Posterior cingulate gyrus (tissue), 11 donors: ENCODE measurements at regions of chr19 and their contacts with region 1.

Region 1: GRCh38 chr19:5031231-5032100 is 62.6 kb downstream of the KDM4B start:
- DNase-seq: peak; percentile 78 to 98 (median 92)

Region 2: GRCh38 chr19:4815426-4816201 is 215.9 kb before region 1 on chr19:
- intact Hi-C with region 1: loop called (anchors 2 kb)
- DNase-seq: peak; percentile 84 to 98 (median 92)

Region 3: GRCh38 chr19:4873930-4874329 is 157.5 kb before region 1 on chr19:
- intact Hi-C with region 1: loop called (anchors 1 kb)
- DNase-seq: no peak

Region 4: DNA sequence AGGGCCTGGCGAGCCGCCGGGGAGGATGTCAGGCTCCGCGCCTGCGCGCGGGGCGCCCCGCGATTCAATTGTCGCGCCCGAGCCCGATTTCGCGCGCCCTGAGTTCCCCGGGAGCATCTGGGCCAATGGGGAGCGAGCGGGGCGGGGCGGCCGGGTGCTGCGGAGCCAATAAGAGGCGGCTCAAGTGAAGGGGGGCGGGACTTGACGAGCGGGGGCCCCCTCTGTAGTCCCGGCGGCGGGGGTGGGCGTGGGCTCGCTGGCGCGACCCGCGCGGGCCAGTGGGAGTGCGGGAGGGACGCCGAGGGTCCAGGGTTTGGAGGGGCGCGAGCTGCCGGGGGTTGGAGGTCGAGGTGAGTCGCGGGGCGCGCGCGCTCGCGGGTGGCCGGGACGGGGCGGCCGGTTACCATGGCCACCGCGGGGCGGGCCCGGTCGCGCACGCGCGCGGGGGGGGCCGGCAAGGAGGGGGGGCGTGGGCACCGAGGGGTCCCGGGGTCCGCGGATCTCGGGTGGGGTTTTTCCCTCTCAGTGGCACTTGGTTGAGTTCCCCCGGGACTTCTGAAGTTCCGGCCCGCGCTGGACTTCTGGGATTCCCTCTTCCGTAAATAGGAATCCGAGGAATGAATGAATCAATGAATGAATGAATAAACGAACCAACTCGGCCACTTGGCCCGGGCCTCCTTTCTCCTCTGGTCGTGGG is 121.4 kb before region 1 on chr19:
- intact Hi-C with region 1: loop called (anchors 5 kb)
- DNase-seq: peak; percentile 78 to 99 (median 93)

Region 5: DNA sequence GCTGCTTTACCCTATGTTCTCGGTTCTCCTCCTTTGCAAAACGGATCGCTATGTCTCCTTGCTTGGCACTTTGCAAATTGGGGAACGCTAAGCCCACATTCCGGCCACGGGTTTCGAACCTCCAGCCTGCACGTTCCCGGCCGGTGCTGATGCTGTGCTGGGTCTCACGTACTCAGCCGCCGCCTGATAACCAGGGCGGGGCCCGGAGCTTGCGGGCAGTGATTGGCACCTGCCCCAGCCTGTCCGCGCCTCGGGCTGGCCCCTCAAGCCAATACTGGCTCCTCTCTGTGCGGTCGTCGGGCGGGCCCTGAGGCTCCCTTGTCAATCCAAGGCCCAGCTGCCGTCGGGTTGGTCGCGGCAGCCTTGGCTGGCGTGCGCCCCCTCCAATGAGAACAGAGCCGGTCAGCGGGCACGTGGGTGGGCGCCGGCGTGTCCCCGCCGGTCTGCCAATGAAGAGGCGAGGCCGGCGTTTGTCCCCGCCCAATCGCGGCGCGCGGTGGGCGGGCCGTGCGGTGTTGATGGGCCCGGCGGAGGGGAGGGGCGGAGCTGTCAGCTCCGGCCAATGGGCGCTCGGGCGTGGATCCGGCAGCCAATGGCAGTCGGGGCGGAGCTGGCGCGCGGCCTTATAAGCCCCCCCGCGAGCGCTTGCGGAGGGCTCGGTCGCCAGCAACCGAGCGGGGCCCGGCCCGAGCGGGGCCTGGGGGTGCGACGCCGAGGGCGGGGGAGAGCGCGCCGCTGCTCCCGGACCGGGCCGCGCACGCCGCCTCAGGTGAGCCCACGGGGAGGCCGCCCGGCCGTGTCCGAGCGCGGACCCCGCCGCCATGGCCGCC is 62.8 kb before region 1 on chr19 and contains the start of gene KDM4B:
- intact Hi-C with region 1: loop called (anchors 5 kb)
- DNase-seq: peak; percentile 96 to 100 (median 100)